ENCODE measurements at regions of chr2 and their contacts with region 1.

Region 1: GRCh38 chr2:113198790-113199612 is 25.2 kb downstream of the PSD4 start:
- DNase-seq: peak; percentile 77 to 96
- H3K4me3 ChIP-seq: peak overlapping the region; percentile 60
- CTCF ChIP-seq: peak in 1 of 3 donors; percentile 45
- POLR2A ChIP-seq: no peak

Region 2: GRCh38 chr2:111967018-111967417 is 1232.0 kb before region 1 on chr2:
- intact Hi-C with region 1: no loop called
- DNase-seq: no peak
- H3K4me3 ChIP-seq: no peak overlapping the region
- CTCF ChIP-seq: no peak
- POLR2A ChIP-seq: no peak

Region 3: DNA sequence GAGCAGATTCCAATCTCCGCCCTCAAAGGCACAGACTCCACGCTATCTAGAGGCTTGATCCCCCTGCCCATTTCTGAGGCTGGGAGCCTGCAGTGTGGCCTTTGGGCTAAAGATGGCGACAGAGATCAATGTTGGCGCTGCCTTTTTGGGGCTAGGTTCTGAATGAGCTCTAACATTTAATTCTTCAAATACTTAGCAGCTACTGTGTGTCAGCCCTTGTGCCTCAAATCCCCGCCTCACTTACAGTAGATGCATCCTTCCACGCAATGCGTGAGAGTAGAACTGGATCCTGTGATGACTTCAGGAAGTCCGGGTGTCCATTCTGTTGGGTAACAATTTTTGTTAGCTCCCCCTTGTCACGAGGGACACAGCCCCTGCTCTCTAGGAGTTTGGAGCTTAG is 118.9 kb before region 1 on chr2:
- intact Hi-C with region 1: loop called (anchors 5 kb)
- DNase-seq: peak; percentile 36 to 90
- H3K4me3 ChIP-seq: no peak overlapping the region
- CTCF ChIP-seq: no peak
- POLR2A ChIP-seq: no peak

Region 4: DNA sequence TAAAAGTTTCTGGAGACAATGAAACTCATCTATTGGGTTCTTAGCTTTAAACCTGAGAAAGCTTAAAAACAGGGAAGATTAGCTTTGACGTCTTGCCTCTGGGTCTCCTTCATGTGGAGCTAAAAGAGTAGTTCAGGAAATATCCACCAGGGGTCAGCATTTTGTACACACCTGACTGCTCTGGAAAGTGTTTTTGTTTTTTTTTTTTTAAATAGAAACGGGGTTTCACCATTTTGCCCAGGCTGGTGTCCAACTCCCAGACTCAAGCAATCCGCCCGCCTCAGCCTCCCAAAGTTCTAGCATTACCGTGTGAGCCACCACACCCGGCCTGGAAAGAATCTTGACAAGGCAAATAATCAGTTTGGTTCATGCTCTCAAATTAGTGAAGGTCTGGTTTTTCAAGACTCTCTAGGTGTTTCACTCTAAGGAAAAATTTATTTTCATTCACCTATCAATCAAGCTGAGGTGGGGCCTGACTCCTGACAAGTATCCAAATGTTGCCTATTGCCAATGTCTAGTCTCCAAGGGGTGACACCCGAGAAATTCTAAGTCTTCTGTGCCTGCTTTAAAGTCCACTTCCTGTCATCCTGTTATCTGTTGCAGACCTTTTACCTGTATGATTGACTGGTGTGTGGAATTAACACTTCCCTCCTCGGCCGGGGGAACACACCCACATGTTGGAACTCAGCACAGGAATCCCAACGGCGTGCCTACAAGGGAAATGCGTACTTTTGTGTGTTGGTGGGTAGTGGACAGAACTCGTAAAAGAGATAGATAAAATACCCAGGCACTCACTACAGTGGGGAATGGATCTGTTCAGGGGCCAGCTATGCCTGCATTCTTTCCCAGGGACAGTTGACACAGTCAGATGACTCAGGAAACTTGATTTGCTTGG is 60.3 kb before region 1 on chr2:
- intact Hi-C with region 1: loop called (anchors 5 kb)
- DNase-seq: peak in 1 of 2 donors; percentile 53
- H3K4me3 ChIP-seq: no peak overlapping the region
- CTCF ChIP-seq: no peak
- POLR2A ChIP-seq: no peak